ENCODE measurements at regions of chr20 and their contacts with region 1.

Region 1: GRCh38 chr20:25310268-25310920 is 62.5 kb downstream of the PYGB start:
- DNase-seq: peak; percentile 83
- H3K4me3 ChIP-seq: peak overlapping the region in 1 of 3 experiments; percentile 20
- H3K27ac ChIP-seq: peak overlapping the region; percentile 23
- H3K4me1 ChIP-seq: peaks cover 25% of the 10 kb centered on the region
- H3K27me3 ChIP-seq: no peaks in the 10 kb centered on the region
- CTCF ChIP-seq: peak; percentile 84 to 87

Region 2: DNA sequence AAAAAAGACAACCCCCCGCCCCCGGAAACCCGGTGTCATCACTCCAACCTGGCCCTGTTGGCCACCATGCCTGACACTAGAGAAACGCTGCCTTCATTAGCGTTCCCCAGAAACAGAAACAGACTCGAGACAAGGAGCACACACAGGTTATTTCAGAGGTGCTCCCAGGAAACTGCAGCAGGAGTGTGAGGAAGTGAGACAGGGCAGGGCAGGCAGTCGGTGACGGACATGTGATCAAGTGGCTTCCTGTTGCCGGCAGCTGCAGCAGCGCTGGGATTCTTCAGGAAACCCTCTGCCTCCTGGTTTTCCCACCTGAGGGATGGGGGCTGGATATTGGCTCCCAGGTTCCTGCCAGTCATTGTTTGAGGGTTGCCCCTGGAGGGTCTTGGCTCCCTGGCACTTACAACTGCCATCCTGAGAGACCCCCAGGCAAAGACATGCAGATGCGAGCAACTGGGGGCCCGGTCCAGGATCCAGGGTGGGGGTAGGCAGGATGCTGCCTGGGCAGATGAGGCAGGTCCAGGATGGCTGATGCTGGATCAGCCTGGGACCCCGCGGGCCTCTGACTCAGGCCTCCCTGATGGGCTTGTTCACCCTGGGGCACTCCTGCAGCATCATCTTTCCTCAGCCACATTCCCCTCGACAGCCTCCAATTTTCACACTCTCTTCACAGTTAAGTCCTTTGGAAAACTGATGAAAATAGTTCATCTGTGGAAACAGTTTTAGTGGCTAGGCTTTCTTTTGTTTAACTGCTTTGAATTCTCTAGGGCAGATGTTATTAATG is 991.6 kb before region 1 on chr20:
- CTCF ChIA-PET with region 1: no interaction called
- dilution Hi-C with region 1: no loop called
- in situ Hi-C with region 1: no loop called
- intact Hi-C with region 1: no loop called
- DNase-seq: no peak
- H3K4me3 ChIP-seq: no peak overlapping the region
- H3K27ac ChIP-seq: no peak overlapping the region
- H3K4me1 ChIP-seq: peaks cover 4% of the 10 kb centered on the region
- H3K27me3 ChIP-seq: no peaks in the 10 kb centered on the region
- CTCF ChIP-seq: no peak

Region 3: GRCh38 chr20:25223179-25223661 is 87.2 kb before region 1 on chr20:
- CTCF ChIA-PET with region 1: no interaction called
- dilution Hi-C with region 1: no loop called
- in situ Hi-C with region 1: loop called in 1 of 2 experiments (anchors 25 kb)
- intact Hi-C with region 1: no loop called
- DNase-seq: peak; percentile 99
- H3K4me3 ChIP-seq: no peak overlapping the region
- H3K27ac ChIP-seq: peak overlapping the region; percentile 79
- H3K4me1 ChIP-seq: peaks cover 53% of the 10 kb centered on the region
- H3K27me3 ChIP-seq: no peaks in the 10 kb centered on the region
- CTCF ChIP-seq: peak in 1 of 2 donors; percentile 65

Region 4: DNA sequence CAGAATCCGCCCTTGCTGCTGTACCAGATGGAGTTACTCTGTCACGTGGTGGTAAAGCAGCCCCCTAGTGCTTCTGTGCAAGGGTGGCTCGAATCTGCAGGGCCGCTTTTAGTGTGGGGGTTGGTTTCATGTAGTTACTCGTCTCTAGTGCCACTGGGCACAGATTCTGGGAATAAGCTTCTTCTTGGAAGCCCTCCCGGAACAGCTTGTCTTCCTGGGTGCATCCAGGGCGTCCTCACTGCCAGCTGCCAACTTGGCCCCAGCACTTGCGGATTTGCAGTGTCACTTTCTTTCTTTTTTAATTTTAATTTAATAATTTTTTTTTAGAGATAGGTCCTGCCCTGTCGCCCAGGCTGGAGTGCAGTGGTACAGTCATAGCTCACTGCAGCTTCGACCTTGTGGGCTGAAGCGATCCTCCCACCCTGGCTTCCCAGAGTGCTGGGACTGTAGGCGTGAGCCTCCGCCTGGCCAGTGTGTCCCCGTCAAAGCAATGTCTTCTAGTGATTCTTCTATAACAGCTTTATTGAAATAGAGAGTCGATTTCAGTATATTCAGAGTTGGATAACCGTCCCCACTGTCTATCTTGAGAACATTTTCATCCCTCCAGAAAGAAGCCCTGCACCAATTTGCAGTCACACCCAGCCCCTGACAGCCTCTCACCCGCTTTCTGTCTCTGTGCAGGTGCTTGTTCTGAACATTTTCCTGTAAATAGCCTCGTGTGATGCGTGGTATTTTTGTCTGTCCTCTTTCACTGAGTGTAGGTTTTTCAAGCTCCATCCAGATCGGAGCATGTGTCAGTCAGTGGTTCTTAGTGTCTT is 36.6 kb before region 1 on chr20:
- CTCF ChIA-PET with region 1: no interaction called
- dilution Hi-C with region 1: loop called (anchors 5 kb)
- in situ Hi-C with region 1: no loop called
- intact Hi-C with region 1: no loop called
- DNase-seq: no peak
- H3K4me3 ChIP-seq: no peak overlapping the region
- H3K27ac ChIP-seq: no peak overlapping the region
- H3K4me1 ChIP-seq: no peaks in the 10 kb centered on the region
- H3K27me3 ChIP-seq: no peaks in the 10 kb centered on the region
- CTCF ChIP-seq: no peak

Region 5: DNA sequence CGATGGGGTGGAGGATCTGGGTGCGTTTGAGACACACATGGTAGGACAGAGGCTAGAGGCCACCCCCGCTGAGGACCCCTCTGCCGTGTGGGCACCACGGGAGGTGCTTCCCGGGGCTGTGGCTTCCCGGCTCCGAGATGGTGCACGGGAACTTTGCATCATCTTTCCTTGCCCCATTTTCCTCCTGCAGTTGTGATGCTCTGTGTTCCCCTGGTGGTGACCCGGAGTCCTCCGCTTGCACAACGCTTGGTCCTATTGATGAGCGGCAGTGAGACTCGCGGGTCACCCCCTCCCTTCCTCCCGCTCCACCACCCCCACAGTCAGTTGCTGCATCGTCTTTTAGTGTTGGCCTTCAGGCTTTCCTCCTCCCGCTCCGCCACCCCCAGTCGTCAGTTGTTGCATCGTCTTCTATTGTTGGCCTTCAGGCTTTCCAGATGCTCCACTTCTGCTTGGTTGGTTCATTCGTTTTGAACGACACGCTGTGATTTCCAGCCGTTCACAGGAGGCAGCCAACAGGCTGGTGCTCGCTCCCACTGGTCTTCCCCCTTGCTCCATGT is 25.2 kb before region 1 on chr20:
- CTCF ChIA-PET with region 1: no interaction called
- dilution Hi-C with region 1: no loop called
- in situ Hi-C with region 1: no loop called
- intact Hi-C with region 1: no loop called
- DNase-seq: no peak
- H3K4me3 ChIP-seq: no peak overlapping the region
- H3K27ac ChIP-seq: no peak overlapping the region
- H3K4me1 ChIP-seq: no peaks in the 10 kb centered on the region
- H3K27me3 ChIP-seq: no peaks in the 10 kb centered on the region
- CTCF ChIP-seq: no peak

Region 6: GRCh38 chr20:25336561-25337422 is 26.4 kb after region 1 on chr20:
- CTCF ChIA-PET with region 1: no interaction called
- dilution Hi-C with region 1: no loop called
- in situ Hi-C with region 1: no loop called
- intact Hi-C with region 1: no loop called
- DNase-seq: peak; percentile 76
- H3K4me3 ChIP-seq: no peak overlapping the region
- H3K27ac ChIP-seq: no peak overlapping the region
- H3K4me1 ChIP-seq: peaks cover 3% of the 10 kb centered on the region
- H3K27me3 ChIP-seq: no peaks in the 10 kb centered on the region
- CTCF ChIP-seq: peak; percentile 67 to 89

Region 7: GRCh38 chr20:25399037-25399430 is 88.6 kb after region 1 on chr20:
- CTCF ChIA-PET with region 1: no interaction called
- dilution Hi-C with region 1: loop called (anchors 5 kb)
- in situ Hi-C with region 1: loop called in 1 of 2 experiments (anchors 5 kb)
- intact Hi-C with region 1: loop called (anchors 1 kb)
- DNase-seq: peak; percentile 65
- H3K4me3 ChIP-seq: no peak overlapping the region
- H3K27ac ChIP-seq: no peak overlapping the region
- H3K4me1 ChIP-seq: no peaks in the 10 kb centered on the region
- H3K27me3 ChIP-seq: no peaks in the 10 kb centered on the region
- CTCF ChIP-seq: peak; percentile 54 to 60

Region 8: GRCh38 chr20:25508078-25508770 is 197.8 kb after region 1 on chr20:
- CTCF ChIA-PET with region 1: no interaction called
- dilution Hi-C with region 1: no loop called
- in situ Hi-C with region 1: no loop called
- intact Hi-C with region 1: no loop called
- DNase-seq: peak; percentile 28
- H3K4me3 ChIP-seq: no peak overlapping the region
- H3K27ac ChIP-seq: no peak overlapping the region
- H3K4me1 ChIP-seq: peaks cover 3% of the 10 kb centered on the region
- H3K27me3 ChIP-seq: no peaks in the 10 kb centered on the region
- CTCF ChIP-seq: no peak

Region 9: DNA sequence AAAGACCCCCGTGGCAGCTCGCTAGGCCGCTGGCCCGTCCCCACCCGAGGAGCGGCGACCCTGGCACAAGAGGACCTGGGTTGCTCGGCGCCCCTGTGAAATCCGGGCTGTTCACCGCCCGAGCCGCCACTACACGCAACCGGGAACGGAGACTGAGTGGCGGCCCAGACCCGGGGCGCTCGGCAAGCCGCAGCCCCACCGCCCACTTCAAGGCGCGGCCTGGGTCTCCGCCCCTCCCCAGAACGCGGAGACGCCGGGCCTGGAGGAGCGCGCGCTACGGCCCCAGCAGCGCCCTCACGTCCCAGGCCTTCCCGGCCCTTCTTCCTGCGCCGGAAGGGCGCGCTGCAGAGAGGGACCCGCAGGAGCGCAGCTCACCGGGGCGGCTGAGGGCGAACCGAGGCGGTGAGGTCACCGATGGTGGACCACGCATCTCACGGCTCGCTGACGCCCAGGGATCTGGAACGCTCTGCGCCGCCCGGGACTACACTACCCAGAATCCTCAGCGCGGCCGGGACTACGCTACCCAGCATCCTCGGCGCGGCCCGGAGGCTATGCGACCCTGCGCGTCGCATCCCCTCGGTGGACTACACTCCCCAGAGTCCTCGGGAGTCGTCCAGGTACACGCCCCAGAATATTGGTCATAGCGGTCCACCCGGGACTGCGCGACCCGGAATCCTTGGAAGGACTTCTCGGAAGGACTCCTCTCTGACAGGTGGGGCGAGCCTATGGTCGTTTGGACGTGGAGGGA is 386.2 kb after region 1 on chr20 and contains the start of gene ZNF337:
- CTCF ChIA-PET with region 1: no interaction called
- dilution Hi-C with region 1: no loop called
- in situ Hi-C with region 1: loop called in 1 of 2 experiments (anchors 25 kb)
- intact Hi-C with region 1: no loop called
- DNase-seq: peak; percentile 95
- H3K4me3 ChIP-seq: peak within 1 kb of the TSS; percentile 75 to 92 (median 91)
- H3K27ac ChIP-seq: peak within 1 kb of the TSS; percentile 79
- H3K4me1 ChIP-seq: no peaks in the 10 kb centered on the region
- H3K27me3 ChIP-seq: no peaks in the 10 kb centered on the region
- CTCF ChIP-seq: peak in 1 of 2 donors; percentile 38
- total RNA-seq, gene ZNF337: 13.7 to 22.1 TPM